Activated CD4-positive, alpha-beta T cell treated with anti-CD3 and anti-CD28 coated beads for 36 hours (primary cell): ENCODE measurements at regions of chr3 and their contacts with region 1.

Region 1: DNA sequence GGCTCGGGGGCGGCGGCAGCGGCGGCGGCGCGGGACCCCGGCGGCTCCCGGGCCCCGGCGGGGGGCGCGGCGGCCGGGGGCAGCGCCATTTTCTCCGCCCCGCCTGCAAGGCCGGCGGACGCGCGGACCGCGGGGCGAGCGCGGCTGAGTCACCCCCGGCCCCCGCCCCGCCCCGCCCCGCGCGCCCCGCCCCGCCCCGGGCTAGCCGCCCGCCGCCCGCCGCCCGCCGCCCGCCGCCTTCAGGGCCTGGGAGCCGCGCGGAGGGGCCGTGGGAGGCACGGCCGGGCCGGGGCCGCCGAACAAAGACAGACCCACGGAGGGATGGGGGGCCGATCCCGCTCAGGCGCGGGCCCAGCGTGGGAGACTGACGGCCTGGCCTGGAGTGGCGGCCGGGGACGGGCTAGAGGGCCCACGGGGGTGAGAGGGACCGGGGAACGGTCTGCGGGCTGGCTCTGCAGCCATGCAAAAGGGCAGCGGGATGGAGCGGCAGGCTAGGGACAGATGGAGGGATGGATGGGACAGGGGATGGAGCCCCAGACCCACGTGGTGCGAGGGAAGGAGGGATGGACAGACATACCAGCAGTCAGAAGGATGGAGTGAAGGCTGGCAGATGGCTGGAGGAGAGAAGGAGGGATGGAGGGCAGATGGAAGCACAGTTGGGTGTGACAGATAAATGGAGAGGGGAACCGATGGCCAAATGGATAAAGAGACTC is at the start of gene EIF4E3:
- DNase-seq: peak; percentile 65
- ATAC-seq: peak; percentile 34
- H3K4me3 Mint-ChIP-seq: peak within 1 kb of the TSS; percentile 91
- H3K27ac Mint-ChIP-seq: peak within 1 kb of the TSS; percentile 95
- H3K4me1 Mint-ChIP-seq: peaks cover 67% of the 10 kb centered on the region
- H3K27me3 Mint-ChIP-seq: no peaks in the 10 kb centered on the region
- total RNA-seq, gene EIF4E3: 28.7 to 29.7 TPM

Region 2: GRCh38 chr3:71269906-71270305 is 455.5 kb before region 1 on chr3:
- CTCF ChIA-PET with region 1: no interaction called
- POLR2A ChIA-PET with region 1: no interaction called
- intact Hi-C with region 1: no loop called
- DNase-seq: peak; percentile 31
- ATAC-seq: no peak
- H3K4me3 Mint-ChIP-seq: peak overlapping the region; percentile 44
- H3K27ac Mint-ChIP-seq: peak overlapping the region; percentile 86
- H3K4me1 Mint-ChIP-seq: peaks cover 74% of the 10 kb centered on the region
- H3K27me3 Mint-ChIP-seq: no peaks in the 10 kb centered on the region

Region 3: GRCh38 chr3:71703796-71704195 is 21.6 kb before region 1 on chr3:
- CTCF ChIA-PET with region 1: interaction called, 7 read pairs
- POLR2A ChIA-PET with region 1: no interaction called
- intact Hi-C with region 1: loop called (anchors 2 kb)
- DNase-seq: no peak
- ATAC-seq: no peak
- H3K4me3 Mint-ChIP-seq: no peak overlapping the region
- H3K27ac Mint-ChIP-seq: peak overlapping the region; percentile 94
- H3K4me1 Mint-ChIP-seq: peaks cover 72% of the 10 kb centered on the region
- H3K27me3 Mint-ChIP-seq: no peaks in the 10 kb centered on the region

Region 4: DNA sequence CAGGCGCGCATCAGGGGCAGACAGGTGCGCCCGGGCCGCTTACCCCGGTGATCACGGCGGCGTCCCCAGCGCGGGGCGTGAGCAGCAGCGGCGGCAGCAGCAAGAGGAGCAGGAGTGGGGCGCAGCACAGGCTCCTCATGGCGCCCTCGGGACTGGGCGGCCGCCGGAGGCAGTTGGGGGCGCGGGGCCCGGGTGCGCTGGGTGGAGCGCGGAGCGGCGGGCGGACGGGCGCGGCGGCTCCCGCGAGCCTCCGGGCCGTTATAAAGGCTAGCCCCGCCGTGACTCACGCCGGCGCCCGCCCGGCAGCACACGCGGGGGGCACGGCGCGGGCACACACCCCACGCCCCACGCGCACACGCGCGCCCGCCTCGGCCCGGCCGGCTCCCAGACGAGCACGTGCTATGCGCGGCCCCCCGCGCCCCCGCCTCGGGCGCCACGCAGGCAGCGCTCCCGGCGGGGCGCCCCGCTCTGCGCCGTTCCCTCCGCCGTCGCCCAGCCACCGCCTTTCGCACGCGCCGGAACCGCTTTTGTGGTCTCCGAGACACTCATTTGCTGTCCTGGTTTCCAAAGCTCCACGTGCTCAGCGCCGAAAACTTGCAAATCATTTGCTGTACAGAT is 59.6 kb after region 1 on chr3 and contains the start of gene PROK2:
- CTCF ChIA-PET with region 1: interaction called, 8 read pairs
- POLR2A ChIA-PET with region 1: no interaction called
- intact Hi-C with region 1: loop called in 1 of 2 experiments (anchors 5 kb)
- DNase-seq: peak; percentile 68
- ATAC-seq: peak; percentile 78
- H3K4me3 Mint-ChIP-seq: peak within 1 kb of the TSS; percentile 75
- H3K27ac Mint-ChIP-seq: peak within 1 kb of the TSS; percentile 59
- H3K4me1 Mint-ChIP-seq: peaks cover 8% of the 10 kb centered on the region
- H3K27me3 Mint-ChIP-seq: peaks cover 43% of the 10 kb centered on the region
- total RNA-seq, gene PROK2: 0.32 to 0.37 TPM

Region 5: DNA sequence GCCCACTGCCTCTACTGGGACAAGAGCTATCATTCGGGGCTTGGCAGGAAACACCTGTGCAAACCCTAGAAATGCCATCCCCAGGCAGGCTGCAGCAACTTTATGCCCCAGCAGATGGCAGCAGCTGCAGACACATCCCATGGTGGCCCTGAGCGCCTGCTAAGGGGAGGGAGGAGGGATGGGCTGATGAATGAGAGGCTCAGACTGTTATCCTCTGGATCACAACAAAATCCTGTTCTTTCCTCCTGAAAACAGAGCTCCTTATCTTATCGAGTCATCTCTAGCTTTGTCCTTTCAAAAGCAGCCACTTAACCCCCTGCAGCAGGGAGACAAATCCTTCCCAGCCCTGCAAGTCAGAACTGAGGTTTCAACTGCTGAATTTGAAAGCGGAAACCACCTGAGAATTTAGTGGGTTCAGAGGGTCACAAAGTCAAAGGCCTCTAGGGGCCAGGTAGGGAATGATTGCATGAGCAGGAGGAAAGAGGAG is 150.1 kb after region 1 on chr3:
- CTCF ChIA-PET with region 1: no interaction called
- POLR2A ChIA-PET with region 1: no interaction called
- intact Hi-C with region 1: loop called in 1 of 2 experiments (anchors 1 kb)
- DNase-seq: peak; percentile 90
- ATAC-seq: peak; percentile 90
- H3K4me3 Mint-ChIP-seq: no peak overlapping the region
- H3K27ac Mint-ChIP-seq: peak overlapping the region; percentile 89
- H3K4me1 Mint-ChIP-seq: peaks cover 35% of the 10 kb centered on the region
- H3K27me3 Mint-ChIP-seq: peaks cover 6% of the 10 kb centered on the region

Region 6: GRCh38 chr3:72255791-72256559 is 530.5 kb after region 1 on chr3:
- CTCF ChIA-PET with region 1: no interaction called
- POLR2A ChIA-PET with region 1: no interaction called
- intact Hi-C with region 1: loop called in 1 of 2 experiments (anchors 5 kb)
- DNase-seq: peak; percentile 54
- ATAC-seq: no peak
- H3K4me3 Mint-ChIP-seq: no peak overlapping the region
- H3K27ac Mint-ChIP-seq: no peak overlapping the region
- H3K4me1 Mint-ChIP-seq: peaks cover 43% of the 10 kb centered on the region
- H3K27me3 Mint-ChIP-seq: peaks cover 2% of the 10 kb centered on the region

Region 7: DNA sequence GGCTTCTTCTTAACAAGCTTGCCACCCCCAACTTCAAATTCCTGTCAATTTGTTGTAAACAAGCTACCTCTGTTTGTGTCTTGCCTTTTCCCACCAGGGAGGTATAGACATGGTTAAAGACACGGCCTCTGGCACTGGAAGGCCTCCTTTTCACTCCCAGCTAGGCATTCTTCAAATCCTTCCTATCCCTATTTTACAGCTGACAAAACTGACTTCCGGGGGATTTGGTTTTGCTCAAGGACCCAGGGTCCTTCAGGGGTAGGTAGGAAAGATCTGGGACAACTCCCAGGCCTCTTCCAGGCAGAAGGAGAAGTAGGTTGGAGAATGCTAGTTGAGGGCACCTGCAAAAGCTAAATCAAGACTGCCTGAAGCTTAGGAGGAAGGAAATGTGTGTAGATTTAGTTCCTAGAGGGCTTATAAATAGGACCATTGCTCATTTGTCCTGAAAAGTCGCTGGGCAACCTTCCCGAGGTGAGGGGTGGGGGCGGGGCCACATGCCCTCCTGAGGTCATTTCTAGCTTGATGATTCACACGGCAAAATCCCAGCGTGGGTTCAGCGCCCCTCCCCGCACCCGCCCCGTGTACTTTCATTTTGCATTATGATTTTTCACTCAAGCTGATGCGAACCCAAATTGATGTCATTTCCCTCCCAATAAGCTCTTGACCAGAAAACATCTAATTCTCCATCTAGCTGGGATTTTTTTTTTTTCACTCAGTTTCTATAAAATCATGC is 757.3 kb after region 1 on chr3:
- CTCF ChIA-PET with region 1: no interaction called
- POLR2A ChIA-PET with region 1: no interaction called
- intact Hi-C with region 1: loop called in 1 of 2 experiments (anchors 10 kb)
- DNase-seq: peak; percentile 94
- ATAC-seq: peak; percentile 46
- H3K4me3 Mint-ChIP-seq: peak overlapping the region; percentile 51
- H3K27ac Mint-ChIP-seq: peak overlapping the region; percentile 90
- H3K4me1 Mint-ChIP-seq: peaks cover 73% of the 10 kb centered on the region
- H3K27me3 Mint-ChIP-seq: no peaks in the 10 kb centered on the region